Activated T-helper 1 cell treated with anti-CD3 and anti-CD28 coated beads, Interleukin-12 subunit alpha, Interleukin-12 subunit beta, Interleukin-2, Interleukin-4 antibody, amounts not matched to agents 30 ng/mL and 10 ng/mL and 1 ng/mL, durations not matched to agents 14 hours and 24 hours and 36 hours (primary cell): ENCODE measurements at regions of chr7 and their contacts with region 1.

Region 1: DNA sequence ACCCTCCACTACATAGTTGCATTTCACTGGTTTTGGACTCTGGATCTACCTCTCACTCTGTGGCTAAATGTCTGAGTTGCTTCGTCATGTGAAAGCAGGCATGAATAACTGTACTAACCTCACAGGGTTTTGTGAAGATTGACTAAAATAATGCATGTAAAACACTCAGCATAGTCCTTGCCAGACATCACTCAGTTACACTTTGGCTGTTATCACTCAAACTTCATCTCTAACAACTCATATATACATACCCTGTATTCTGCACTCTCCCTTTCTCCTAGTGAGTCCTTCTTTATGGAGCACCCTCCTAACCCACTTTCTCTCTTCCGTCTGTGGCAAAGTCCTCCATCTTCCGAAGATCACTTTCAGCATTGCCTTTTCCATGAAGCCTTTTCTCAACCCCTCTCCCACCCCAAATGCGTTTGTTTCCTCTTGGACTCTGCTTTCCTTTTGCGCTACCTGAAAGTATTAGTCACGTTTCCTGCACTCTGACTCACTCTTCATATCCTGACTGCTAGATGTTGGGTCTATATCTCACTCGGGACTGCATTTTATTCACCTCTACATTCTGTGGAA is 72.6 kb downstream of the OSBPL3 start:
- DNase-seq: peak; percentile 38
- H3K4me3 Mint-ChIP-seq: no peak overlapping the region
- H3K27ac Mint-ChIP-seq: no peak overlapping the region
- H3K4me1 Mint-ChIP-seq: peaks cover 48% of the 10 kb centered on the region
- H3K27me3 Mint-ChIP-seq: no peaks in the 10 kb centered on the region

Region 2: DNA sequence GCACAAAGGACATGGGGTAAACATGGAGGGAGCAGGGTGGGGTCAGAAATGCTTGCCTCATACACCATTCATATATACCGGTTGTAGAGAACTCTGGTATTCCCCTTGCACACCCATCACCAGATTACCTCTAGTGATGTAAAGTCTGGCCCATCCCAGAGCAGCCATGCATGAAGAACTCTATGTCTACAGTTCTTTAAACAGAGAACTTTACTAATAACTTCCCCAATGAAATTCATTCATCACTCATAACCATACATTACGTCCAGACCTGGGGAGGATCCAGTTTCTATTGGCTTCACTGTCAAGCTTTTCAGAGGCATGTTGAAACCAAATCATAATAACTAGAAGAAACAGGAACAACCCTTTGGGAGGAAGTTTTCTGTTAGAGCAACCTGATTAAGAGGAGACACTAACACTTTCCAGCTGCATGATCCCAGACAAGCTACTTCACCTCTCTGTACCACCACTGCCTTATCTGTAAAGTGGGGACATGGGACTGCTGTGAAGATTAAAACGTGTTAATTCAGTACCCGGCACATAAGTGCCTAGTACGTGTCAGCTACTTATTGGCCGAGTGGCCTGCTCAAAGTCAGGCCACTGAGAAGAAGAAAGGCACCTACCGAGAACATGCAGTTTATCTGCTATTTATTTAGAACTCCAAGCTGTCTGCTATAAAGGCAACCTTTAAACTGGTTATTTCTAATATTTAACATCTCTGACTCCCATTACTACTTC is 1496.8 kb before region 1 on chr7:
- intact Hi-C with region 1: no loop called
- DNase-seq: no peak
- H3K4me3 Mint-ChIP-seq: no peak overlapping the region
- H3K27ac Mint-ChIP-seq: no peak overlapping the region
- H3K4me1 Mint-ChIP-seq: peaks cover 6% of the 10 kb centered on the region
- H3K27me3 Mint-ChIP-seq: peaks cover 2% of the 10 kb centered on the region

Region 3: DNA sequence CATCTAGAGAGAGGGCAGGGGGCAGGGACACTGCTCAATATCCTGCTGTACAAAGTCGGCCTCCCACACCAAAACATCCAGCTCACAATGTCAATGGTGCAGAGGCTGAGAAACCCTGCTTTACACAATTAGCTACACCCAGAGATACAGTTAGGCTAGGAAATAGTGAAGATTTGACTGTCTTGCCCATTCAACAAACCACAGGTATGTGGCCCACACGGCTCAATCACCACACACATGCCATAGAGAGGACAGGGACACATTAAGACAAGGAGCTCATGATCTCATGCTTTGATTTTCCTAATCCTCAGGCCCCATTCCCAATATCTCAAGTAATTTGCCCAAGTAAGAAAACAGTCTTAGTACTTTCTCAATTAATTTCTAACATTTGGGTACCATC is 37.8 kb before region 1 on chr7:
- intact Hi-C with region 1: loop called (anchors 1 kb)
- DNase-seq: no peak
- H3K4me3 Mint-ChIP-seq: no peak overlapping the region
- H3K27ac Mint-ChIP-seq: peak overlapping the region; percentile 13
- H3K4me1 Mint-ChIP-seq: peaks cover 49% of the 10 kb centered on the region
- H3K27me3 Mint-ChIP-seq: no peaks in the 10 kb centered on the region

Region 4: GRCh38 chr7:24922099-24922773 is 14.8 kb after region 1 on chr7:
- intact Hi-C with region 1: loop called (anchors 1 kb)
- DNase-seq: no peak
- H3K4me3 Mint-ChIP-seq: peak overlapping the region; percentile 3
- H3K27ac Mint-ChIP-seq: peak overlapping the region; percentile 91
- H3K4me1 Mint-ChIP-seq: peaks cover 95% of the 10 kb centered on the region
- H3K27me3 Mint-ChIP-seq: no peaks in the 10 kb centered on the region

Region 5: GRCh38 chr7:25028370-25029021 is 121.1 kb after region 1 on chr7:
- intact Hi-C with region 1: loop called (anchors 1 kb)
- DNase-seq: peak; percentile 13
- H3K4me3 Mint-ChIP-seq: peak overlapping the region; percentile 12
- H3K27ac Mint-ChIP-seq: peak overlapping the region; percentile 93
- H3K4me1 Mint-ChIP-seq: peaks cover 40% of the 10 kb centered on the region
- H3K27me3 Mint-ChIP-seq: peaks cover 12% of the 10 kb centered on the region

Region 6: GRCh38 chr7:25125137-25125946 is 217.9 kb after region 1 on chr7 and contains the start of gene CYCS:
- intact Hi-C with region 1: loop called (anchors 2 kb)
- DNase-seq: peak; percentile 100
- H3K4me3 Mint-ChIP-seq: peak within 1 kb of the TSS; percentile 93
- H3K27ac Mint-ChIP-seq: peak within 1 kb of the TSS; percentile 99
- H3K4me1 Mint-ChIP-seq: peaks cover 29% of the 10 kb centered on the region
- H3K27me3 Mint-ChIP-seq: no peaks in the 10 kb centered on the region
- total RNA-seq, gene CYCS: 280 TPM in 2 replicates